Vagina (tissue), 2 donors: ENCODE measurements at regions of chr10 and their contacts with region 1.

Region 1: GRCh38 chr10:17428351-17429097 is 25.9 kb downstream of the ST8SIA6 start:
- DNase-seq: no peak
- H3K4me3 ChIP-seq: no peak overlapping the region
- H3K27ac ChIP-seq: no peak overlapping the region
- H3K4me1 ChIP-seq: no peaks in the 10 kb centered on the region
- H3K27me3 ChIP-seq: no peaks in the 10 kb centered on the region
- CTCF ChIP-seq: no peak
- POLR2A ChIP-seq: no peak

Region 2: GRCh38 chr10:16832351-16833080 is 596.0 kb before region 1 on chr10:
- intact Hi-C with region 1: loop called (anchors 10 kb)
- DNase-seq: no peak
- H3K4me3 ChIP-seq: no peak overlapping the region
- H3K27ac ChIP-seq: peak overlapping the region; percentile 53
- H3K4me1 ChIP-seq: no peaks in the 10 kb centered on the region
- H3K27me3 ChIP-seq: no peaks in the 10 kb centered on the region
- CTCF ChIP-seq: no peak
- POLR2A ChIP-seq: no peak